AG04450 (cell line): ENCODE measurements at regions of chr11 and their contacts with region 1.

Region 1: DNA sequence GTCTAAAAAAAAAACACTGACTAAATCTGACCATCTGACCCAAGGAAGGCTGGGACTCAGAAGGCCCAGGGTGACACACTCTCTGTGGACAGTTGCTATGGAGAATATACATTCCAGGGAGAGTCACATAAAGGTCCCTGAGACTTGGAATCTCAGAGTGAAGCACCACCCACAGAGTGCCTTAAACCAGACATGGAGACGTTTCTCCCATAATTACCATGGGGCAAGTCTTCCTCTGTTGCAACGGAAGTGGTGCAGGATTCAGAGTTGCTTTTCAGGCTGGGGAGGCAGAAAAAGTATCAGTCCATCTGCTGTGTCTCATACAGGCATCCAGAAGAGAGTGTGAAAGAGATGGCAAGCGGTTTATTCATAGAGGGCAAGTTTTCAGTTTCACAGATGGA is 58.7 kb upstream of the SLN start:
- DNase-seq: no peak
- H3K4me3 ChIP-seq: no peak overlapping the region
- H3K27ac ChIP-seq: no peak overlapping the region
- H3K27me3 ChIP-seq: no peaks in the 10 kb centered on the region
- CTCF ChIP-seq: no peak

Region 2: GRCh38 chr11:107549253-107549953 is 221.1 kb before region 1 on chr11:
- CTCF ChIA-PET with region 1: interaction called, 32 read pairs
- POLR2A ChIA-PET with region 1: no interaction called
- DNase-seq: no peak
- H3K4me3 ChIP-seq: no peak overlapping the region
- H3K27ac ChIP-seq: no peak overlapping the region
- H3K27me3 ChIP-seq: no peaks in the 10 kb centered on the region
- CTCF ChIP-seq: peak; percentile 93

Region 3: GRCh38 chr11:107573438-107573837 is 197.1 kb before region 1 on chr11:
- CTCF ChIA-PET with region 1: interaction called, 73 read pairs
- POLR2A ChIA-PET with region 1: no interaction called
- DNase-seq: no peak
- H3K4me3 ChIP-seq: no peak overlapping the region
- H3K27ac ChIP-seq: no peak overlapping the region
- H3K27me3 ChIP-seq: peaks cover 7% of the 10 kb centered on the region
- CTCF ChIP-seq: no peak

Region 4: DNA sequence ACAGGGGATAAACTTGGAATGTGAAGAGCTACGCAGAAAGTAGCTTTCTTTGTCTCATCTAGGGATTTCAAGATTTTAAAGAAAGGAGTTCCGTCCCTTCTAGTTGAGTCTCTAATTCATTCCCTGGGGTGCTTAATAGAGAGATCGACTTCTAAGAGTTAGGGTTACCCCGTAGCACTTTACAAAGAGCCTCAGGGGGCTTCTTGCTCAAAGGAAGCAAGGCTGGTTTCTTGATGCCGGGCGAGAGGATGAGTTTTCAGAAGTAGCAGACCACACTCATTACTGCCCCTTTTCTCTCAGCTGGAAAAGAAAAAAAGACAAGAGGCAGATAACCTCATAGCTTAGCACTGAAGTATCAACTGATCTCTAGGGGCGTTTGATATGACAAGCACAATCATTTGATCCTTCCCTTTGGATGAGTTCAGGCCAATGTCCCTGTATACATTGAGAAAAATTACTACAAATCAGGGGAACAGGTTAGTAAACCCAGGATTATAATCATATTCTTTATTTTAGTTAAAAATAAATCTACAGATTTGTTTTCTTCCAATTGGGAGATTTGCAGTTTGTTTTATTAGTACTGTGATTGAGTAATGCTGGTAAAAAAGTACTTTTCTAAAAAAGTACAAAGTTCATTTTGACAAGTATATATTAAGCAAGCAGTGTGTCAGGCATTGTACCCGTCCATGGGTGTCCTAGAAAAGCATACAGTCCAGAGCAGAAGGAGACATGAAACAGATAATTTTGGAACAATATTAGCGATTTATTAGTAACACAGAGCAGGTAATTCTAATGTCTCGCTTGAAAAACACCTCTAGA is 160.9 kb before region 1 on chr11:
- CTCF ChIA-PET with region 1: no interaction called
- POLR2A ChIA-PET with region 1: no interaction called
- DNase-seq: no peak
- H3K4me3 ChIP-seq: no peak overlapping the region
- H3K27ac ChIP-seq: no peak overlapping the region
- H3K27me3 ChIP-seq: no peaks in the 10 kb centered on the region
- CTCF ChIP-seq: no peak

Region 5: GRCh38 chr11:107689317-107690202 is 81.0 kb before region 1 on chr11:
- CTCF ChIA-PET with region 1: interaction called, 12 read pairs
- POLR2A ChIA-PET with region 1: no interaction called
- DNase-seq: peak; percentile 2
- H3K4me3 ChIP-seq: no peak overlapping the region
- H3K27ac ChIP-seq: no peak overlapping the region
- H3K27me3 ChIP-seq: no peaks in the 10 kb centered on the region
- CTCF ChIP-seq: peak; percentile 71

Region 6: GRCh38 chr11:107757661-107758060 is 12.9 kb before region 1 on chr11:
- CTCF ChIA-PET with region 1: interaction called, 20 read pairs
- POLR2A ChIA-PET with region 1: no interaction called
- DNase-seq: no peak
- H3K4me3 ChIP-seq: no peak overlapping the region
- H3K27ac ChIP-seq: no peak overlapping the region
- H3K27me3 ChIP-seq: no peaks in the 10 kb centered on the region
- CTCF ChIP-seq: 0 out of 2 replicates have a peak, but pooled peaks have one; percentile 5

Region 7: DNA sequence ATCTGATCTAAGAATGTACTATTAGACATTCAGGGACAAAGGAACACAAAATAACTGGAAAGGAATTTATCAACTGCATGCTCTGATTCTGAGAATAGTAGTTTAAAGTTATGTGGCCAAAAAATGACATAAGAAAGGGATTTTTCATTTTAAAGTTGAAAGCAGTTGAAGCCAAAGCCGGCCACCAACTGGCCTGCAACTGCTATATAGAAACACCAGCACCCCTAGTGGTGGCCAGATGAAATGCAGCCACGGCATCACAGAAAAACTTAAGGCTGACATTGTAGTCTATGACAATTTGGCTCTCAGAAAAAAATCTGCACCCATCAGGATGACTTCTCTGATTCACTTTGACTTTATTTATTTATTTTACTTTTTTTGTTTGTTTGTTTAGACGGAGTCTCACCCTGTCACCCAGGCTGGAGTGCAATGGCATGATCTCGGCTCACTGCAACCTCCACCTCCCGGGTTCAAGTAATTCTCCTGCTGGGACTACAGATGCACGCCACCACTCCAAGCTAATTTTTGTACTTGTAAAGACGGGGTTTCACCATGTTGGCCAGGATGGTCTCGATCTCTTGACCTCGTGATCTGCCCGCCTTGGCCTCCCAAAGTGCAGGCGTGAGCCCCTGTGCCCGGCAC is 28.8 kb after region 1 on chr11:
- CTCF ChIA-PET with region 1: interaction called, 12 read pairs
- POLR2A ChIA-PET with region 1: no interaction called
- DNase-seq: peak; percentile 39
- H3K4me3 ChIP-seq: no peak overlapping the region
- H3K27ac ChIP-seq: no peak overlapping the region
- H3K27me3 ChIP-seq: no peaks in the 10 kb centered on the region
- CTCF ChIP-seq: peak; percentile 98

Region 8: DNA sequence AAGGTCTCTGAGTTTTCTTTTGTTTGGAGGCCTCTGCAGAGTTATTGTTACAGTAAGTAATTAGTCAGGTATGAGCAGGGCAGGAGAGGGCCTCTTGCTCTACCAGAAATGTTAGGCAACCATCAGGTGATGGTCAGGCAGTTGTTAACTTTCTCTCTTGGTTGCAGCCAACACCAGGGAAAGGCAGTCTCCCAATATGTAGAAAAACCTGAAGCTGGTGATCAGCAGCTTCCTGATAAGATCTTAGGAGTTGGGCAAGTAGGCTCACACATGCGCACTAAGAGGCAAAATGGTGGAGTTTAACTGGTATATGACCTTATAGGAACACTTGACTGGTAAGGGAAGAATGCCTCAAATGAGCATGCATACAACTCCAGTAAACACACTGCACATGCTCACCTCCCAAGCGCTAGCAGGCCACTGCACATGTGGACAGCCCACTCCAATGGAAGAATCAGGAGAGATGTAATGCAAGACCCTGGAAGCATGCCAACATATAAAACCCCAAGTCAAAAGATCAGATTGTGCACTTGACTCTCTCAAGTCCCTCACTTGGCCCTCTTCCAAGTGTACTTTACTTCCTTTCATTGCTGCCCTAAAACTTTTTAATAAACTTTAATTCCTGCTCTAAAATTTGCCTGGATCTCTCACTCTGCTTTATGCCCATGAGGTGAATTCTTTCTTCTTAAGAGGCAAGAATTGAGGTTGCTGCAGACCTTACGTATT is 111.7 kb after region 1 on chr11:
- CTCF ChIA-PET with region 1: no interaction called
- POLR2A ChIA-PET with region 1: no interaction called
- DNase-seq: no peak
- H3K4me3 ChIP-seq: no peak overlapping the region
- H3K27ac ChIP-seq: no peak overlapping the region
- H3K27me3 ChIP-seq: no peaks in the 10 kb centered on the region
- CTCF ChIP-seq: no peak